Activated CD8-positive, alpha-beta T cell treated with anti-CD3 and anti-CD28 coated beads for 36 hours (primary cell): ENCODE measurements at regions of chr4 and their contacts with region 1.

Region 1: DNA sequence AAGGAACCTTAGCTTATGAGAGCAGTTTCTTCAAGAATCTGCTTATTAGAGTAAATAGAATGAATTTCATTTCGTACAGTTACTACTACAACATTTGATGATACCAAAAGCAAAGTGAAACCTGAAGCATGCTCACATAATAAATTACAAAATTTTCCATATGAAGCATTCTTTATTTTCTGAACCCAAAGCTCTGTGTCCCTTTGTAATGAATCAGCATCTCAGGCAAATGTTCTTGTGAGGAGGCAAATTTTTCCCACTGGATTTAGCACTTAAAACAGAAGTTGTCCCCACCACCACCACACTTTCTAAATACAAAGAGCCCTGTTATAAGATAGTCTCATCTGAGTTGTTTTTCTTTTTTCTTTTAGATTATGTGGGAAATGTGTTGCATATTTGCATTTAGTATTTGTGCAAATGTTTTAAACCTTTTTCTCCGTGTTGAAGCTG is 70.7 kb upstream of the NFKB1 start:
- DNase-seq: no peak
- ATAC-seq: no peak
- H3K4me3 Mint-ChIP-seq: peak overlapping the region; percentile 84
- H3K27ac Mint-ChIP-seq: peak overlapping the region; percentile 88
- H3K4me1 Mint-ChIP-seq: peaks cover 11% of the 10 kb centered on the region
- H3K27me3 Mint-ChIP-seq: no peaks in the 10 kb centered on the region
- CTCF ChIP-seq: no peak

Region 2: DNA sequence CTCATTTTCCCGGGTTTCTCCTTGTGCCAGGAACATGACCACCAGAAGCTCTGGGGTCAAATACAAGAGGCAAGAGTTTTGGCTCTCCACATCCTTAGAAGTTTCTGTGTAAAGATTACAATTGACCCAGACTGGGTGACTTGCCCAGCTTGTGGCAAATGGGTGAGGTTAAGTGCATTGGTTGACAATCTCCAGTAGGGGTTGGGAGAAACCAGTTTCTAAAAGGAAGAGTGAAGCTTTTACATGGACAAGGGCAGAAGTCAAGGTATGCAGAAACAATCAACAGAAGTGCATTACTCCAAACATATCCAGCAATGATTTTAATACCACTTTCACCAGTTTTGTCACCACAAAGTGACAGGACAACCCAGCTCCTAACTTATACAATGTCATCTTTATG is 175.0 kb before region 1 on chr4:
- CTCF ChIA-PET with region 1: interaction called, 3 read pairs
- POLR2A ChIA-PET with region 1: no interaction called
- intact Hi-C with region 1: loop called (anchors 5 kb)
- DNase-seq: no peak
- ATAC-seq: no peak
- H3K4me3 Mint-ChIP-seq: no peak overlapping the region
- H3K27ac Mint-ChIP-seq: no peak overlapping the region
- H3K4me1 Mint-ChIP-seq: no peaks in the 10 kb centered on the region
- H3K27me3 Mint-ChIP-seq: no peaks in the 10 kb centered on the region
- CTCF ChIP-seq: no peak